Activated CD4-positive, alpha-beta T cell treated with anti-CD3 and anti-CD28 coated beads for 36 hours (primary cell): ENCODE measurements at regions of chr11 and their contacts with region 1.

Region 1: GRCh38 chr11:117426269-117426685 is 98.6 kb downstream of the CEP164 start:
- DNase-seq: peak; percentile 86
- ATAC-seq: peak; percentile 78
- H3K4me3 Mint-ChIP-seq: no peak overlapping the region
- H3K27ac Mint-ChIP-seq: no peak overlapping the region
- H3K4me1 Mint-ChIP-seq: peaks cover 7% of the 10 kb centered on the region
- H3K27me3 Mint-ChIP-seq: no peaks in the 10 kb centered on the region

Region 2: DNA sequence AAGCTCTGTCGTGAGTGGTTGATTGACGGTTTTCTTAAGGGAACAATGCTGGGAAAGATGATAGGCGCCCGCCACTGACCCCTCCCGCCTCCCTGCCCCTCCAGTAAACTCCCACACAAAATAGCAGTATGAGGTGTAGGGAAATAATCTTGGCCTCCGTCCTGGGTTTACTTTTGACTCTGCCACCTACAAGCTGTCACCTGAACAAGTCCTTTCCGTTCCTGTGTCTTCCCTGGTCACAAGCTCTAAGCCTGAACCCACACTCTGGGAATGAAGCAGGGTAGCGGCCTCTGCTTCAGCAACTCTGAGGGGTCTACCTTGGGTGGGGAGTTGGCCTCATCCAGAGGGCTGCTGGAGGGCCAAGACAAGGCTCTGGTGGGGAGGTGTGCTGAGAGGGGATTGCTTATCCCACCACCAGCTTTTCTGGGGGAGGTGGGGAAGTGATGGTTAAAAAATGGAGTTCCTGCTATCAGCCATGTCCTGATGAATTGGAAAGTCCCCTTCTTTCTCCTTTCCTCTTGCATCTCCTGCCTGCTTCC is 10.8 kb before region 1 on chr11:
- CTCF ChIA-PET with region 1: interaction called, 26 read pairs
- POLR2A ChIA-PET with region 1: no interaction called
- intact Hi-C with region 1: no loop called
- DNase-seq: no peak
- ATAC-seq: no peak
- H3K4me3 Mint-ChIP-seq: no peak overlapping the region
- H3K27ac Mint-ChIP-seq: no peak overlapping the region
- H3K4me1 Mint-ChIP-seq: no peaks in the 10 kb centered on the region
- H3K27me3 Mint-ChIP-seq: no peaks in the 10 kb centered on the region

Region 3: DNA sequence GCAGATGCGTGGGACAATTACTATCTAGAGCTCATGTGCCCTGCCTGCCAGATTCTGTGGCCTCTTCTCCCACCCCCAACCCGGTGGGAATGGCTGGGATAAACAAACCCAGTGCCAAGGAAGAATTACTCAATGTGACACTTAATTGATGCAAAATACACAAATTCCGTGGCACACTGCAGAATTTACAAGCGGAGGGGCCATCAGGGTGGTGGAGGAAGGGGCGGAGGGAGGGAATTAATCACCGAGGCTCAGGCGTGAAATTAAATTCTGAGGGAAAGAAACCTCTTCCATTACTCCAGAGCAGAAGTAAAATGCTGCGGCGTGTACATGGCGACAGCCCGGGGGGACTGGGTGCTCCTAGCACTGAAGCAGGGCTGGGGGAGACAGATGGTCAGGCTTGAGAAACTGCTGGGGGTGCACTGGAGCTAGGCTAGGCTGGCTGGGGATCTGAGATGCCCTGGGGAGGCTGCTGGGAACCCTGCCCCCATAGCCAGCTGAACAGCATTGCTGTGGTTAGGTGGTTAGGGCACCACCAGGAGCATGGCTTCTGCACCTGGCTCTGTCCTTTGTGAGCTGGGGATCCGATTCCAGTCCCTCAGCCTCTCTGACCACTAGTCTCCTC is 101.9 kb after region 1 on chr11:
- CTCF ChIA-PET with region 1: interaction called, 14 read pairs
- POLR2A ChIA-PET with region 1: no interaction called
- intact Hi-C with region 1: no loop called
- DNase-seq: no peak
- ATAC-seq: no peak
- H3K4me3 Mint-ChIP-seq: no peak overlapping the region
- H3K27ac Mint-ChIP-seq: no peak overlapping the region
- H3K4me1 Mint-ChIP-seq: no peaks in the 10 kb centered on the region
- H3K27me3 Mint-ChIP-seq: peaks cover 6% of the 10 kb centered on the region

Region 4: GRCh38 chr11:117621226-117621625 is 194.9 kb after region 1 on chr11:
- CTCF ChIA-PET with region 1: interaction called, 48 read pairs
- POLR2A ChIA-PET with region 1: no interaction called
- intact Hi-C with region 1: loop called (anchors 1 to 2 kb)
- DNase-seq: peak; percentile 30
- ATAC-seq: no peak
- H3K4me3 Mint-ChIP-seq: no peak overlapping the region
- H3K27ac Mint-ChIP-seq: no peak overlapping the region
- H3K4me1 Mint-ChIP-seq: no peaks in the 10 kb centered on the region
- H3K27me3 Mint-ChIP-seq: peaks cover 4% of the 10 kb centered on the region

Region 5: GRCh38 chr11:117817368-117818040 is 391.2 kb after region 1 on chr11:
- CTCF ChIA-PET with region 1: interaction called, 25 read pairs
- POLR2A ChIA-PET with region 1: no interaction called
- intact Hi-C with region 1: loop called in 1 of 2 experiments (anchors 1 kb)
- DNase-seq: peak; percentile 95
- ATAC-seq: peak; percentile 45
- H3K4me3 Mint-ChIP-seq: peak overlapping the region; percentile 49
- H3K27ac Mint-ChIP-seq: peak overlapping the region; percentile 99
- H3K4me1 Mint-ChIP-seq: peaks cover 59% of the 10 kb centered on the region
- H3K27me3 Mint-ChIP-seq: no peaks in the 10 kb centered on the region